H1 (cell line): ENCODE measurements at regions of chr7 and their contacts with region 1.

Region 1: GRCh38 chr7:44398511-44398911 is 73.1 kb upstream of the CAMK2B start:
- DNase-seq: no peak
- H3K4me3 ChIP-seq: no peak overlapping the region
- H3K27ac ChIP-seq: no peak overlapping the region
- H3K4me1 ChIP-seq: no peaks in the 10 kb centered on the region; a peak in 2 of 7 replicates
- H3K27me3 ChIP-seq: no peaks in the 10 kb centered on the region
- CTCF ChIP-seq: no peak
- EP300 ChIP-seq: no peak
- POLR2A ChIP-seq: no peak
- RAD21 ChIP-seq: no peak

Region 2: DNA sequence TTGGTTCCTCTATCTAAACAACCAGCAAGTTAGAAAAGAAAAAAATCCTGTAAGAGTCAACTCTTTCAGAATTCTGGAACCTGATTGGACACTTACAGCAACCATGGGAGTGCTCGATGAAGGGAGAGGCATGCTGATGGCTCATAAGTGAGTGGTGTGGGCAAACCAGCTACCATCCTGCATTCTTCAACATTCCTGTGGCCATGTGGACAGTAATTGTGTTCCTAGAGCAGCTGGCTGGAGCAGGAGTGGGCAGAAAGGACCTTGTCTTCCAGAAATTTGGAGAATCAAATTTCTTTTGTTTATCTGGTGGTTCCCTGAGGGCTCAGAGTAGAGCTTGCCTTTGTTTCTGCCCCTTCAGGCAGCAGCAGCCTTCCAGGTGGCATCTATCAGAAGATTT is 234.9 kb before region 1 on chr7:
- CTCF ChIA-PET with region 1: no interaction called
- POLR2A ChIA-PET with region 1: no interaction called
- DNase-seq: no peak
- H3K4me3 ChIP-seq: no peak overlapping the region
- H3K27ac ChIP-seq: no peak overlapping the region
- H3K4me1 ChIP-seq: peaks cover 2 to 5% (median 4%) of the 10 kb centered on the region in 4 experiments; a peak in 5 of 7 replicates
- H3K27me3 ChIP-seq: no peaks in the 10 kb centered on the region
- CTCF ChIP-seq: no peak
- EP300 ChIP-seq: no peak
- POLR2A ChIP-seq: no peak
- RAD21 ChIP-seq: no peak

Region 3: DNA sequence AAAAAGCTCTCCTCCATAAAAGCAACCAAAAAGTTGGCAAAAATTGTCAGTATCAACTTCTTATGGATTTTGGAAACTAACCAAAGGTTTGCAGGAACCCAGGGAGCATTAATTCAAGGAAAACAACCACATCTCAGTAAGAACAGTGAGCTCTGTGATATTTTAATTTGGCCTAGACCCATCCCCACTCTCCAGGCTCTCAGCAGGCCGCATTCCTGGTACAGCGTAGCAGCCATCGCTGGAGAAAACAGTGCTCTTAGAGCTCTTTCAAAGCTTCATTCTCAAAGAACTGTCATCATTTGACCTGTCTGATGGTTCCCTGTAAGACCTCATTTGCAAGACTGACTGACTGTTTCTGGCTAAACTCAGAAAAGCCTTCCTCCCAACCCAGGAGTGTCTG is 10.1 kb after region 1 on chr7:
- CTCF ChIA-PET with region 1: interaction called, 12 read pairs
- POLR2A ChIA-PET with region 1: interaction called, 5 read pairs
- DNase-seq: peak in 1 of 2 experiments; percentile 15
- H3K4me3 ChIP-seq: peak overlapping the region in 1 of 4 experiments; percentile 35; a peak in 1 of 8 replicates
- H3K27ac ChIP-seq: no peak overlapping the region
- H3K4me1 ChIP-seq: peaks cover 4 to 12% (median 8%) of the 10 kb centered on the region in 4 experiments; a peak in 5 of 7 replicates
- H3K27me3 ChIP-seq: no peaks in the 10 kb centered on the region
- CTCF ChIP-seq: no peak
- EP300 ChIP-seq: no peak
- POLR2A ChIP-seq: no peak
- RAD21 ChIP-seq: no peak

Region 4: DNA sequence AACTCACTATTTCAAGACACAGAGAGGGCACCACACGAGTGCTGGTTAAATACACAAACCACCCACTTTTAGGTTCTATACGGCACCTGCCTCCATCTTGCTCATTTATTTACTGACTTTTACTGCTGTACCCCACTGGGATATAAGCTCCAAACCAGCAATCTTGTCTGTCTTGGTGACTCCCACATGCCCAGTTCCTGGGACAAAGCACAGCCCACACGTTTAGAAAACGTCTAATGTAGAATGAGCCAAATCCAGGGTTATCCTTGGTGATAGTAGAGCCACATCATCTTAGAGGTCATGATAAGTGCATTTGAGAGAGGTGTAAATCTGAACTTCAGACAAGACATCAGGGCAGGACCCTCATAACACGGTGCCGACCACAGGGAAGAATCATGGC is 18.4 kb after region 1 on chr7:
- CTCF ChIA-PET with region 1: interaction called, 17 read pairs
- POLR2A ChIA-PET with region 1: no interaction called
- DNase-seq: no peak
- H3K4me3 ChIP-seq: no peak overlapping the region
- H3K27ac ChIP-seq: no peak overlapping the region
- H3K4me1 ChIP-seq: no peaks in the 10 kb centered on the region
- H3K27me3 ChIP-seq: no peaks in the 10 kb centered on the region
- CTCF ChIP-seq: no peak
- EP300 ChIP-seq: no peak
- POLR2A ChIP-seq: no peak
- RAD21 ChIP-seq: no peak